Mammary epithelial cell (primary cell): ENCODE measurements at regions of chr19 and their contacts with region 1.

Region 1: DNA sequence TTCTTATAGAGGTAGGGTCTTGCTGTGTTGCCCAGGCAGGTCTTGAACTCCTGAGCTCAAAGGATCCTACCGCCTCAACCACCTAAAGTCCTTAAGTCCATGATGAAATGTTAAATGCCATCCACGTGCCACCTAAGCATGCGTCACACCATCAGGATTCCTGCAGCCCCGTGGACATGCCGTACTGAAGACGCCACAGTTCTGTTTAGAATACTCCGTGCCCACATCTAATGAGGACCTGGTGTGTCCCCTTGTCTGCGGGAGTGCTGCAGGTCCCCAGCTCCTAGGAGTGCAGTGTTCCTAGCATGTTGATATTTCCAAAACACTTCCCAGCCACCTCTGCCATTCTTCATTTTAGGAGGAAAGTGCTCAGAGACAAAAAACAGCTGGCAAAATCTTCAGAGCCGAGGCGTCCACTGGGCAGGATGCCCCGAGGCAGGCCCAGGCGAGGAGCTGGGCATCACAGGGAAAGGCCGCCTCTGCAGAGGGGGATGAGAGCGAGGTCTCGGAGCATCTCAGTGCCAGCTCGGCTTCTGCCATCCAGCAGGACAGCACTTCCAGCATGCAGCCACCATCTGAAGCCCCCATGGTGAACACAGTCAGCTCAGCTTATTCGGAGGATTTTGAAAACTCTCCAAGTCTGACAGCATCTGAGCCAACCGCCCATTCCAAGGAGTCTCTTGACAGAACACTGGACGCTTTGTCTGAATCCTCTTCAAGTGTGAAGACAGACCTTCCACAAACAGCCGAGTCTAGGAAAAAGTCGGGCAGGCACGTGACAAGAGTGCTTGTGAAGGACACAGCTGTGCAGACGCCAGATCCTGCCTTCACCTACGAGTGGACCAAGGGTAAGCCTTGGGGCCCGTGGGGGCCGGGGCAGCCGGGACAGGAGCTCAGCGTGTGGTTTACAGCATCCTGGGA is 13.2 kb downstream of the C19orf44 start:
- DNase-seq: peak; percentile 74
- H3K4me3 ChIP-seq: no peak overlapping the region
- H3K27ac ChIP-seq: peak overlapping the region; percentile 19
- H3K4me1 ChIP-seq: peaks cover 18% of the 10 kb centered on the region
- H3K27me3 ChIP-seq: no peaks in the 10 kb centered on the region
- CTCF ChIP-seq: no peak

Region 2: GRCh38 chr19:16035601-16036297 is 473.7 kb before region 1 on chr19:
- CTCF ChIA-PET with region 1: no interaction called
- dilution Hi-C with region 1: no loop called
- in situ Hi-C with region 1: no loop called
- intact Hi-C with region 1: no loop called
- DNase-seq: no peak
- H3K4me3 ChIP-seq: no peak overlapping the region
- H3K27ac ChIP-seq: no peak overlapping the region
- H3K4me1 ChIP-seq: no peaks in the 10 kb centered on the region
- H3K27me3 ChIP-seq: no peaks in the 10 kb centered on the region
- CTCF ChIP-seq: no peak

Region 3: DNA sequence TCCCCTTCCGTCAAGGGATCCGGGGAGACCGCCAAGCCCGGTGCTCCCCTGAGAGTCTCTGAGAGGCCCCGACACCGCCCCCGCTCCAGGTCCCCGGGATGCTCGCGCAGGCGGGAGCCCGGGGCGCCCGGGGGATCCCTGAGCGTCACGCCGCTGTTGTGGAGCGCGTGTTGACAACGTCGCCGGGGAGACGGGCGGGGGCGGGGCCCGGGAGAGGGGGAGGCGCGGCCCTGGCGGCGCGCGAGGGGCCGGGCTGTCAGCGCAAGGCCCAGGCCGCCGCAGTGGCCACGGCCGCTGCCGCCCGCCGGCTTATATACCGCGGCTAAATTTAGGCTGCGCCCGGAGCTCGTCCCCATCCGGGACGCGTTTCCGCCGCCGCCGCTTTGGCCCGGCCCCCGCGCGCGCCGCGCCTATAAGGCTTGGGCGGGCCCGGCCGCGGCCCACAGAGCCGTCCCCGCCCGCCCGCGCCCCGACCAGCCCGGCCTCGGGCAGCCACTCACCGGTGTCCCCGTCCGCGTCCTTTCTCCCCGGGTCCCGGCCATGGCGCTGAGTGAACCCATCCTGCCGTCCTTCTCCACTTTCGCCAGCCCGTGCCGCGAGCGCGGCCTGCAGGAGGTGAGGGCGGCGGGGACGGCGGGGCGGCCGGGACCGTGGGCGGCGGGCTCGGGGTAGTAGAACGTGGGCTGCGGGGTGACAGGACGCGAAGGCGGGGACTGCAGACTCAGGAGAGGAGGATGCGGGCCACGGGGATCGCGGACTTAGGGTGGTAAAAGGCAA is 184.8 kb before region 1 on chr19 and contains the start of gene KLF2:
- CTCF ChIA-PET with region 1: no interaction called
- dilution Hi-C with region 1: loop called (anchors 10 kb)
- in situ Hi-C with region 1: no loop called
- intact Hi-C with region 1: no loop called
- DNase-seq: peak; percentile 84
- H3K4me3 ChIP-seq: peak within 1 kb of the TSS; percentile 53 to 65 (median 58)
- H3K27ac ChIP-seq: peak within 1 kb of the TSS; percentile 63
- H3K4me1 ChIP-seq: peaks cover 2% of the 10 kb centered on the region
- H3K27me3 ChIP-seq: no peaks in the 10 kb centered on the region
- CTCF ChIP-seq: no peak
- total RNA-seq, gene KLF2: 0.99 TPM in 1 of 2 donors, not detected in the other

Region 4: DNA sequence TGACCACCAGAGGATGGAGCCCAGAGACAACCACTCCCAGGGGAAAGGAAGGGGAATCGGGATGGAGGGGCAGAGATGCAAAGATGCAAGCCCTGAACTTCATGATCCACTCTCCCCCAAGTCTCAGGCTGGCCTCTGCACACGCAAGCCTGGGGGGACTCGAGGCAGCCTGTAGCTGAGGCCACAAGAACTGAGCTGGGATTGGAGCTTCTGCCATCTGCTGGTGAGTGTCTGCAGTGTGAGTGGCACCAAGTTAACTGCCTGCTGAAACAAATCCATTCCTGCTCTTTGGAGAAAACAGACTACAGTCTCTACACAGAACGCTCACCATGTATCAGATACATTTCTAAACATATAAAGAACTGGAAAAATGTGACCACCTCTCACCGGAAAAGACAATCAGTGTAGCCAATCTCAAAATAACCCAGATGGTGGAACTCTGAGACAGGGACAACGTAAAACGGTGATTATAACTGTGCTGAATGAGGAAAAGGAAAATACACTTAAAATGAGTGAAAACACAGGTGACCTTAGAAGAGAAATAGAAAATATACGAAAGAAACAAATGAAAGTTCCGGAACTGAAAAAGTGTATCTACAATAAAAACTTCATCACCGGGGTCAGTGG is 122.7 kb before region 1 on chr19:
- CTCF ChIA-PET with region 1: no interaction called
- dilution Hi-C with region 1: no loop called
- in situ Hi-C with region 1: no loop called
- intact Hi-C with region 1: no loop called
- DNase-seq: peak; percentile 27
- H3K4me3 ChIP-seq: no peak overlapping the region
- H3K27ac ChIP-seq: no peak overlapping the region
- H3K4me1 ChIP-seq: no peaks in the 10 kb centered on the region
- H3K27me3 ChIP-seq: no peaks in the 10 kb centered on the region
- CTCF ChIP-seq: peak; percentile 73 to 80

Region 5: DNA sequence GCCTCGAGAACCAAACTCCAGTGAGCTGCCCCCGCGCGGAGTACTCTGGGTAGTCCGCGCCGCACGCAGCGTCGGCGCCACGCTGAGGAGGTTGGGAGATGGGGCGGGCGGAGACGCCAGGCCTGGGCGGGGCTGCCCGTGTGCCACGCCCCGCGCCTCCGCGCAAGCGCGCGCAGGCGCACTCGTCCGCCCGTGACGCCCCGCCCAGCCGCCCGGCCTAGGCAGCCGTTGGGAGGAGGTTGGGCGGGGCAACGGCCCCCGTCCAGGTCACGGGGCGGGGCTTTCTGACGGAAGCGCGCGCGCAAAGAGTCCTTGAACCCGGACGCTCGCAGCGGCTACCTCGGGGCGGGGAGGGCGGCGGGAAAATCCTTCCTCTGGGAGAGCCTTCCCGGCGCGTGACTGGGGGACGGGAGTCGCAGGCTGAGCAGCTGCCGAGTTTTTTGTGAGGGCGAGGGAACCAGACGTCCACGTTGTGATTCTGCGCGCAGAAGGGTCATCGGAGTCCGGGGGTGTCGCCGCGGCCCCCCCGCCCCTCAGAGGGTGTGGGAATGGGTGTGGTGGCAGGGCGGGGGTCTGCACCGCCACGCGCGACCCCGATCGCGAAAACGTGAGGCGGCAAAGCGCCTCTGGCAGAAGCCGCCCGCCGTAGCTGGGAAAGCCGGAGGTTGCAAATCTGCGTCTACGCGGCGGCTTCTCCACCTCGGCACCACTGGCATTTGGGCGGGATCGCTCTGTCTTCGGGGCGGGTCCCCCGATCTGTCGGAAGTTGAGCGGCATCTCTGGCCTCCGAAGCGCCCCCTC is 119.0 kb after region 1 on chr19 and contains the start of gene MED26:
- CTCF ChIA-PET with region 1: no interaction called
- dilution Hi-C with region 1: no loop called
- in situ Hi-C with region 1: no loop called
- intact Hi-C with region 1: no loop called
- DNase-seq: peak; percentile 91
- H3K4me3 ChIP-seq: peak within 1 kb of the TSS; percentile 80 to 93 (median 83)
- H3K27ac ChIP-seq: peak within 1 kb of the TSS; percentile 80
- H3K4me1 ChIP-seq: peaks cover 13% of the 10 kb centered on the region
- H3K27me3 ChIP-seq: no peaks in the 10 kb centered on the region
- CTCF ChIP-seq: peak in 1 of 2 donors; percentile 22
- total RNA-seq, gene MED26: 8.8 to 10.9 TPM